BJ (cell line): ENCODE measurements at regions of chr2 and their contacts with region 1.

Region 1: GRCh38 chr2:101883863-101884262 is 107.9 kb upstream of the IL1R2 start:
- DNase-seq: no peak
- H3K4me3 ChIP-seq: no peak overlapping the region
- H3K27me3 ChIP-seq: no peaks in the 10 kb centered on the region
- CTCF ChIP-seq: peak; percentile 63

Region 2: DNA sequence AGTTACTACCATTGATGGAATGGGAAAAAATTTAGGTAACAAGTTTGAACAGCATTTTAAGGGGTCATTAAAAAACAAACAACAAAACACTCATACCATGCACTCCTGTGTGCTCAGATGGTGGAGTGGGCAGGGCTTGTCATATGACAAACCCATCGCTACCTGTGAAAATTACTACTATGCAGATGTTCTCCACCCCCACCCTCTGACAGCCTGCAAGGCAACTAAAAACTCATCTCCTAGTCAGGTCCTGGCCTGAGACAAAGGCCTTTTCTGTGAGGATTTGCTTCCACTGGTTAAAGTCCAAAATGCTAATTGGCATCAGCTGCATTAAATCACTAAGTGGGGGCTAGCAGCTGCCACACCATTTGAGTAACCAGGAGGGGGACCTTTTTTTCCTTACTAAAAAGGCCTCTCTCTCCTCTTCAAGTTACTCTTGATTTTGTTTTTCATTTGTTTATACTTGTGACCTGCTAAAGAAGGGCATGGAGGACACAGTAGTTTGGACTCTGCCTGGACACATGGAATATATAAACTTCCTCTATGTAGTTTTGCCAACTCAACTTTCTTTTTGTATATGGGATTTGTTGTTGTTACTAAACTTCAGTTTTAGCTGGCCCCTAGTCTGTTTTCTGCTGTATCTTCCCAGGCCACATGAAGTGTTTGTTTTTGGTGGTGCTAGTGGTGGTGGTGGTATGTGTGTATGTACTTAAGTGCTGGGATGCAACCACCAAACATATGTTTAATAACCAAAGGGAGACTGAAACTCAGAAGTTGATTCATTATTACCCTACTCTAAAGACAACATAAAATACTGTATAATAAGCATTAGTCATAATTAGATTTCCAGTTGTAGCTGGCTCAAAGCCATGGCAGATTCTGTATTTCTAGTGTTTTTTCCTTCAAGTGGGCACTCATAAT is 65.1 kb before region 1 on chr2:
- CTCF ChIA-PET with region 1: no interaction called
- POLR2A ChIA-PET with region 1: no interaction called
- DNase-seq: no peak
- H3K4me3 ChIP-seq: no peak overlapping the region
- H3K27me3 ChIP-seq: no peaks in the 10 kb centered on the region
- CTCF ChIP-seq: no peak

Region 3: DNA sequence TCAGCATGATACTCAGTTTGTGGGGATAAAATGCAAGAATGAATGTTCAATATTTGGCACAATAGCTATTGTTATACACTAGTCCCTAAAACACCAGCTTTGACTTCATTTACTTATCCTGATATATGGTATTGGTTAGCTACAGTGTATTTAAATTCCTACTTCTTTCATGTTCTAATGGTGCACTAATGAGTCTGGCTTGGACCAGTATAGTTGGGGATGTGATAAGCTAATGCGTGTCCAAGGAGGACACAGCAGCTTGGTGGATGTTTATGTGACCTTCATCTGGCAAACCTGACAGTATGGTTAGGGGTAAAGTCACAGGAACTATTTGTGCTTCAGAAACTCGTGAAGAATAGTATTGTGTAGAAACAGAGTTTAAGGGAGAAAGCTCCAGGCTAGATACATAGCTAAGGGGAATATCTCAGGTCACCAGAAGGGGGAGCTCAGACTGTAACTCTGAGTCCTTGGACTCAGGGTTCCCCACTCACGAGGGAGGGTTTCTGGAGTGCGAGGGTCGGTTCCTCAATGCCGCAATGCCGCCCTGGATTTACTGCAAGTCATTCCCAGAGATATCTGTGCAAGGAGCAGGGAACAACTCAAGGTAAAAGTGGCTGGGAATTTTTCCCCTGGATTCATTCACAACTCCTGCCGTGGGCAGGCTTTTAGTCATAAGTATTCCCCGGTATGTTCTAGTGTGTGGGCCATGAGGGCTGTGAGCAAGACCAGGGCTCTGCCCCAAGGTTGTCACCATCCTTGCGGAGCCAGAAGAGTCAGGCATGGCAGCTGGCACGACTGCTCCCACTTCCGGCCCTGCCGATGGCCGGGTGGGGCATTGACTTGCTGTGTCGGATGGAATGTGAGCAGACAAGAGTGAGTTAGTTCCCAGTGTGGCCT is 122.4 kb after region 1 on chr2:
- CTCF ChIA-PET with region 1: interaction called, 17 read pairs
- POLR2A ChIA-PET with region 1: no interaction called
- DNase-seq: no peak
- H3K4me3 ChIP-seq: no peak overlapping the region
- H3K27me3 ChIP-seq: no peaks in the 10 kb centered on the region
- CTCF ChIP-seq: peak; percentile 79